Activated T-helper 2 cell treated with anti-CD3 and anti-CD28 coated beads, Interferon-gamma antibody, Interleukin-2, Interleukin-4, amounts not matched to agents 10 μg/mL and 5 μg/mL and 100 μg/mL, durations not matched to agents 14 hours and 24 hours and 36 hours (primary cell): ENCODE measurements at regions of chr10 and their contacts with region 1.

Region 1: DNA sequence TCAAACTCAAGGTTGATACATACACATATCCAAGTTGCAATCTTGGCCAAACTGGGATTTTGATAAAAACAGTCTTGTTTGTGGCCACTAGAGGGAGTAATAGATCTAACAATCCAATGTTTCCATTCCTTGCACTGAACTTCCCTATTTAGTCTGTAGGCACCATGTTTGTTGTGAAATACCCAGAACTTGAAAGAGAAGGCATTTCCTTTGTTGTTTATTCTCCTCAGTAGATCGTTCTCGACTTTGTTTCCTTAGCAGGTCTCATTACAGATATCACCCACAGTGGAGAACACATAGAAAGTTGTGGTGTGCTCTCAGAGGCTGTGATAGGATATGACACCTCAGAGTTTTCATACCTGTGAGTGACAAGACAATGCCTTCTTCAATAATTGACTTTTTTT is 70.3 kb upstream of the MXI1 start:
- DNase-seq: no peak
- H3K4me3 Mint-ChIP-seq: no peak overlapping the region
- H3K27ac Mint-ChIP-seq: no peak overlapping the region
- H3K4me1 Mint-ChIP-seq: peaks cover 31% of the 10 kb centered on the region
- H3K27me3 Mint-ChIP-seq: no peaks in the 10 kb centered on the region

Region 2: DNA sequence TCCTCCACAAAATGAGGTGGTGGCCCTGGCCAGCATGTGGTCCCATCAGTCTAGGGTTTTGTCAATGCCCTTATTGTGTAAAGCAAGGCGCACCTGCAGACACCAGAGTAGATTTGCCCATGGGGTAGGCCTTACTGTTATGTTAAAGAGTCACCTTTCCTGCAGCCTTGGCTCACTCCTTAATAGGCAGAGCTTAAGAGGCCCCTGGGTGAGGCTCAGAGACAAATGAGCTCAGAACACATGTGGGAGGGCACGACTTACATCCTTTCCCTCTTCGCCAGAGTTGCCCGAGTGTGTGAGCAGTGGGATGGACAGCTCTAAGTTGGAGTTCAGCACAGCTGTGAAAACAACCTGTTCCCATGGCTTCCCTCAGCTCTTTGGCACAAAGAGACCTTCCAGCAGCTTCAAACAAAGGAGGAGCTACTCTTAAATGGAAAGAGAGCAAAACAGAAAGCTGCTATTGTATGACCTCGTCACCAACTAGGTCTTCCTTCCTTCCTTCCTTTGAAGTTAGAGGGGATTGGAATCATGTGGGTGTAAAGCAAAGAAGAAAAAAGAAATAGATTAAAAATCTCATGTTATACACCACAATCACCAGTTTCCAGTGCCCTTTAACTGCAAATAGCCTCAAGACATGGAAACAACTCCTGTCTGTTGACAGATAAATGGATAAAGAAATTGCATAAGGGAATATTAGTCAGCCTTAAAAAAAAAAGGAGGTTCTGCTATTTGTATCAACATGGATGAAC is 202.0 kb before region 1 on chr10:
- intact Hi-C with region 1: no loop called
- DNase-seq: no peak
- H3K4me3 Mint-ChIP-seq: peak overlapping the region; percentile 49
- H3K27ac Mint-ChIP-seq: peak overlapping the region; percentile 82
- H3K4me1 Mint-ChIP-seq: peaks cover 20% of the 10 kb centered on the region
- H3K27me3 Mint-ChIP-seq: peaks cover 11% of the 10 kb centered on the region

Region 3: GRCh38 chr10:109978481-109978880 is 158.7 kb before region 1 on chr10:
- intact Hi-C with region 1: loop called (anchors 1 kb)
- DNase-seq: peak; percentile 43
- H3K4me3 Mint-ChIP-seq: no peak overlapping the region
- H3K27ac Mint-ChIP-seq: no peak overlapping the region
- H3K4me1 Mint-ChIP-seq: no peaks in the 10 kb centered on the region
- H3K27me3 Mint-ChIP-seq: peaks cover 24% of the 10 kb centered on the region

Region 4: DNA sequence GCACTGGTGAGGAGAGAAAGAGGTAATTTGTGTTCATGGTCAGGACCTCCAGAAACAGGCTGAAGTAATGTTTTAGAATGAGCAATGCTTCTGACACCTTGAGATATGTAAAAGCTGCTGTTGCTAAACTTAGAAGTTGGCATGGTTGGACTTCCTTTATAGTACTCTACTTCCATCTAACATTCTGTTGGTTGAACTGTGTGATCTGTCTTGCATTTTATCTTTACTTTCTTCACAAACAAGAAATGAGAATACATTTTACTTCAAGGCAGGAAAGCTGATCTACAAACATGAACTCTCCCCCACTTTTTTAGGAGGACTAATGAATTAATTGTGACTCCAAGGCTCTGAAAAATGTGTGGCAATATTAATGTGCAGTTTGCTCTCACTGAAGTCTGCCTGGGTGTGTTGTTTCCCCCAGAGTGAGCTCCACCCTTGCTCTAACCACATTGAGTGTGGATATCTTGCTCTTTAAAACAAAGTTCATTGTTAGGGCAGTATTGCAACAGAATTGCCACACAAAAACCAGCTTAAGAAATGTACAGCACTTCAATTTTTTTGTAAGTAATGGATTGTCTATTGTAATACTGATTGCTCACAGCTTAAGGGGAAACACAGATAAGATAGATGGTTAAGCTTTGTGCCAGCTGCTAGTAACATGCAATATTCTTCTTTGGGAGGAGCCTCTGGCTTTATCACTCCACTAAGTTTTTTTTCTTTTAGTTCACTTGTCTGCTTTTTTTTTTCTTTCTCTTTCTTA is 60.4 kb before region 1 on chr10:
- intact Hi-C with region 1: loop called (anchors 5 kb)
- DNase-seq: peak; percentile 41
- H3K4me3 Mint-ChIP-seq: peak overlapping the region; percentile 79
- H3K27ac Mint-ChIP-seq: peak overlapping the region; percentile 95
- H3K4me1 Mint-ChIP-seq: peaks cover 70% of the 10 kb centered on the region
- H3K27me3 Mint-ChIP-seq: no peaks in the 10 kb centered on the region

Region 5: GRCh38 chr10:110156046-110156445 is 18.9 kb after region 1 on chr10:
- intact Hi-C with region 1: loop called (anchors 2 kb)
- DNase-seq: no peak
- H3K4me3 Mint-ChIP-seq: no peak overlapping the region
- H3K27ac Mint-ChIP-seq: no peak overlapping the region
- H3K4me1 Mint-ChIP-seq: peaks cover 36% of the 10 kb centered on the region
- H3K27me3 Mint-ChIP-seq: peaks cover 69% of the 10 kb centered on the region

Region 6: DNA sequence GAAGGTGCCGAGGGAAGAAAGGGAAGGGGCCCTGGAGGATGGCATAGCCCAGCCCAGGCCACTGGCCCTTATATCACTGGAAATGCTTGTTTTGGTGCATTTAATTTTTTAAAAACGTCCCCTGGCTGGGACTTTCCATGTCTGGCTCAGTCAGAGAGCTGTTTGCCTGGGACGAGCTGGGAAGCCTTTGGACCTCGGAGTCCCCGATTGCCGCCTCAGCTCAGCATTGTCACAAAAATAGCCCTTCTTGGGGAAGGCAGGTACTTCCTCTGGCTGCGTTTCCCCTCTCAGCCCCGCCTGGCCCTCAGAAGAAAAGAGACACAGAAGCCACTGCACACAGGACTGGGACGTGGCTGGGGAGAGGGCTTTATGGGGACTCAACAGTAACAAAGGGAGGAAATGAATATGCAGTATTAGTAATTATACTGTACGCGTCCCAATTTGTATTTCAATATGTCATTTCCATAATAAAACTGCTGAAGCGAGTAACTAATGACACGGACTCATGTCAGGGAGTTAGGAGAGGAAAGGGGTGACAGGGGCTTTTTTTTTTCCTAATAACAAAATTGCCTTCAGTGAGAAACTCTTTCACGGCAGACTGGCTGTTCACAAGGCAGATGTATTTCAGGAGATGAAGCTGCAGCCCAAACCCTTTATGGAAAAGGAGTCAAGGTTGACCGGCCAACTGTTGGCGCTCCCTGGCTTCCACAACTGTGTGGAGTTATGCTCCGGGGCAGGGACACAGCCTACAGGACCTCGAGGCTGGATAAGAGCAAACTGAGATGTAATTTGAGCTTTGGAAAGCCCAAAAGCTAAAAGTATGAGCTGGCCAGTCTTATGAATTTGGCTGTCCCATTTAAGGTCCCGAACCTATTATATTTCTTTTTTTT is 39.2 kb after region 1 on chr10:
- intact Hi-C with region 1: no loop called
- DNase-seq: no peak
- H3K4me3 Mint-ChIP-seq: no peak overlapping the region
- H3K27ac Mint-ChIP-seq: no peak overlapping the region
- H3K4me1 Mint-ChIP-seq: no peaks in the 10 kb centered on the region
- H3K27me3 Mint-ChIP-seq: peaks cover 52% of the 10 kb centered on the region

Region 7: DNA sequence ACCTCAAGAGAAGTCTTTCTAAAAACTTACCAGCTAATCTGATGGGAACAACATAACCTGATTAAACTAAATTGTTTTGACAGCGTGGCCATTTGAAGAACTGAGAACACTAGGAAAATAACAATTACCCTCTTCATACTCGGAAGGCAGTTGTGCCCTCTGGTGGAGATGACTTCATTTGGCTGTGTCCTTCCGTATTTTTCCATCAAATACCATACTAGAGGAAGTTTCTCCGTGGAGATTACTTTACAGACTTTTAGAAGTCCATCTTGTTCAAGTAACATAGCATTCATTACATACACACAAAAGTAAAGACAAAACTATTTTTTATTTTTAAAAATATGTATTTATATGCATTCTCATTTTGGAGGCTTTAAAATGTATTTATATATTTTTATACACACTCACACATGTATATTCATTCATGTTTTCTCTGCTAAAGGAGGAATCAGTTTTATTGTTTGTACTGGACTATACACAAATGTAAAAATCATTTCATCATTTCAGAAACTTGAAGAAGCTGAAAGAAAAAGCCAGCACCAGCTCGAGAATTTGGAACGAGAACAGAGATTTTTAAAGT is 142.4 kb after region 1 on chr10:
- intact Hi-C with region 1: loop called (anchors 1 kb)
- DNase-seq: peak; percentile 17
- H3K4me3 Mint-ChIP-seq: no peak overlapping the region
- H3K27ac Mint-ChIP-seq: no peak overlapping the region
- H3K4me1 Mint-ChIP-seq: peaks cover 8% of the 10 kb centered on the region
- H3K27me3 Mint-ChIP-seq: peaks cover 31% of the 10 kb centered on the region

Region 8: DNA sequence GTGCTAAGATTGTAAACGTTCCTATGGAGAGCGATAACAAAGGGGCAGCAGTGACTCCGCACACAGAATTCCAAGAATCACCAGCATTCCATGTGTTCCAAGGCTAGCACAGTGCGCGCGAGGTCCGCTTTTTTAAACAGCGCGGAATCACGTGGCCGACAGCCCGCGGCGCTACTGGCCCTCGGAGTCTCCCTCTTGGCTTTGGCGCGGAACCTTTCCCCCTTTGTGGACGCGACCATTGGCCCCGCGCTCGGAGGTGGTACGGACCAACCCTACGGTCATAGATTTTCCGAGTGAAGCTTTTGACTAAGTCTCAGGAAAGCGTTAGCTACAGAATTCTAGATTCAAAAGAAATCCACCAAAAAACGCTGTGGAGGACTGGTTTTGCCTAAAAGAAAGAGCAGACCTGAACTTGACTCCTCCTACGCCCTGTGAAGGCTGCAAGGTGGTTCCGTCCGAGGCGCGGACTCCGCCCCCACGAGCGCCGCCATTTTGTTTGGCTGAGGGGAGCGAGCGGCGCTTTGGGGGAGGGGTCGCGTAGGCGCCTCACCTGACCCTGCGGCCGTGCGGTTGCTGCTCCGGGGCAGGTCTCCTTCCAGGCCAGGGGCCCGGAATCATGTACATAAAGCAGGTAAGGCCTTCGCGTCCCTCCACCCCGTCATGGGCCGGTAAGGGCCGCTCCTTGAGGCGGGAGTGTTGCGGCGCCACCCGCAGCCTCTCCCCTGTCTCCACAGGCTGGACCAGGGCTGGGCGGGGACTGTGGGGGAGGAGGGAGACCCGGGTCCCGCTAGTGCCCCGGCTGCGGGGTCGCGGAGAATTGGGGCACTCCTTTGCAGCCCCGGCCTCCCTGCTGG is 430.3 kb after region 1 on chr10 and contains the start of gene SMC3:
- intact Hi-C with region 1: loop called (anchors 10 kb)
- DNase-seq: peak; percentile 90
- H3K4me3 Mint-ChIP-seq: peak within 1 kb of the TSS; percentile 90
- H3K27ac Mint-ChIP-seq: peak within 1 kb of the TSS; percentile 98
- H3K4me1 Mint-ChIP-seq: peaks cover 51% of the 10 kb centered on the region
- H3K27me3 Mint-ChIP-seq: peaks cover 9% of the 10 kb centered on the region
- total RNA-seq, gene SMC3: 78.4 and 78.8 TPM in 2 replicates